ENCODE measurements at regions of chr4 and their contacts with region 1.

Region 1: DNA sequence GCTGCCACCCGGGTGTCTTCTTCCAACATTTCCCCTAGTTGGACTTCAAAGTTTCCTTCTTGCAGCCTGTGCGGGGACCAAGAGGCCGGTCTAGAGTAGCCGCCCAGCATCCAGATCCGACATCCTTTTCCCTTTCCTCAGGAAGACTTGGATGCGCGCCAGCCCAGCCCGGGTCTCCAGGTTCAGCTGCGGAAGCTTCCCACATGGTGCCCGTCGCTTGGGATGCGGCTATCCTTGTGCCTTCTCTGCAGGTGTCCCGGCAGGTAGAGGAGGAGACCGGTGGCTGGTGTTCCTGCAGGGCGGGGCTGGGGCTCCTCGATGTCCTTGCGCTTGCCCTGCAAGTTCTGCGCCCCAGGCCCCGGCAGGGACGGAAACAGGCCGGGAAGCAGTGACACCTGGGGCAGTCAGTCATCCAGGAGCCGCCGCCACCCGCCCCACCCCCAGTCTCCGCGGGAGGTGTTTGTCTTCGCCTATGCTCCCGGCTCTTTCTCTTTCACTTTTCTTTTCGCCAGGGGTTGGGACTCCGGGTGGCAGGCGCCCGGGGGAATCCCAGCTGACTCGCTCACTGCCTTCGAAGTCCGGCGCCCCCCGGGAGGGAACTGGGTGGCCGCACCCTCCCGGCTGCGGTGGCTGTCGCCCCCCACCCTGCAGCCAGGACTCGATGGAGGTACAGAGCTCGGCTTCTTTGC is at the start of gene IL15:
- DNase-seq: peak; percentile 29 to 79
- H3K4me3 ChIP-seq: peak within 1 kb of the TSS; percentile 88 to 94
- H3K27ac ChIP-seq: peak within 1 kb of the TSS; percentile 89 to 92
- H3K4me1 ChIP-seq: peaks cover 0 to 9% of the 10 kb centered on the region in 2 donors
- H3K27me3 ChIP-seq: no peaks in the 10 kb centered on the region
- CTCF ChIP-seq: no peak
- total RNA-seq, gene IL15: 11.5 TPM

Region 2: DNA sequence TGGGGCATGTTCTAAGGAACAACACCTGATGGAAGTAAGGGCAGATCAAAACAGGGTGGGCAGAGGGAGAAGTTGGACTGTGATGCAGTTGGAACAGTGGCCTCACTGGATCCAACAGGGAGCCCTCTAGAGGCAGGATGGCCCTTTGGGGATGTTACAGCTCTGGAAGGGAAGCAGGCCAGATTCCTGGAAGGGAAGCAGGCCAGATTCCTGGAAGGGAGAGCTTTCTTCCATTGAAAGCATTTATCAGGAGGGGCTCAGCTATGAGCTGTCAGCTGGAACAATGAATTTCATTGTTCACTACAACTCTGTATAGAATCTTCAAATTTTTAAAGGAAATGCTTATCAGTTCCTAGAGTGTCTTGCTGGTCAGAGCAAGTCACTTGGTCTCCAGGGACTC is 17.9 kb after region 1 on chr4:
- intact Hi-C with region 1: loop called (anchors 2 kb)
- DNase-seq: peak in 1 of 2 donors; percentile 69
- H3K4me3 ChIP-seq: no peak overlapping the region
- H3K27ac ChIP-seq: peak overlapping the region; percentile 62 to 78
- H3K4me1 ChIP-seq: peaks cover 0 to 20% of the 10 kb centered on the region in 2 donors
- H3K27me3 ChIP-seq: no peaks in the 10 kb centered on the region
- CTCF ChIP-seq: peak in 2 of 3 experiments; percentile 18 to 34

Region 3: DNA sequence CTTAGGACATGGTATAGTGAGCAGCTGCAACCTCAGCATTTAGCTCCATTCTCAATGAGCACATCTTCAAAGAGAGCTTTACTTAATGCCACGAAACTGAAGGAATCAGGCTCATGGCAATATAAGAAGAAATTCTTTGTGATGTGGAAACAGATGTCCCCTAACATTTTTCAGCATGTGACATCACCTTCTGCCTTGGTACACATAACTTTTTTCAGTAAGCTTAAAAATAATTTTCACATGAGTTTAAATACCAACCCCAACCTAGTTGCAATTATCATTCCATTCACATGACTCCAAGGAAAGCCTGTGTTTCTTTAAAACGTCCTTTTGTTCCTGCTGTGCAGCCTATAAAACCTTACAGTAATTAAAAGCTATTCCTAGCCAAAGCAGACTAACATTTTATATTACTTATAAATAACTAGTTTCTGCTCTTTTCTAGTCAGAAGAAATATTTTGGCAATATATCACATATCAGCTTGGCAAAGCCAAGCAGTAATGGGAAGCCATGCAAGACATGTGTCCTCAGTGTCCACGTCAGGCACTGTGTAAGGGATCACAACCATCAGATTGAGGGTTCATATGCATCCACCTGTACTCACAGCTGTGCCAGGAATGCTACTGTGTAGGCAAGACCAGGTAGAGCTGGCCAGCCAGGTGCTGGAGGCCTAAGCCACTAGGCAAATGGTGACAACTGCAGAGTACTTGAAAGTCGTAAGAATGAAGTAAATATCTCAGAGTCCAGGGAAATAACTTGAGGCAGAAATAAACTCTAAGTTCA is 743.2 kb after region 1 on chr4:
- intact Hi-C with region 1: loop called (anchors 10 kb)
- DNase-seq: no peak
- H3K4me3 ChIP-seq: no peak overlapping the region
- H3K27ac ChIP-seq: peak overlapping the region; percentile 61 to 71
- H3K4me1 ChIP-seq: peaks cover 4 to 18% of the 10 kb centered on the region in 2 donors
- H3K27me3 ChIP-seq: no peaks in the 10 kb centered on the region
- CTCF ChIP-seq: no peak

Region 4: DNA sequence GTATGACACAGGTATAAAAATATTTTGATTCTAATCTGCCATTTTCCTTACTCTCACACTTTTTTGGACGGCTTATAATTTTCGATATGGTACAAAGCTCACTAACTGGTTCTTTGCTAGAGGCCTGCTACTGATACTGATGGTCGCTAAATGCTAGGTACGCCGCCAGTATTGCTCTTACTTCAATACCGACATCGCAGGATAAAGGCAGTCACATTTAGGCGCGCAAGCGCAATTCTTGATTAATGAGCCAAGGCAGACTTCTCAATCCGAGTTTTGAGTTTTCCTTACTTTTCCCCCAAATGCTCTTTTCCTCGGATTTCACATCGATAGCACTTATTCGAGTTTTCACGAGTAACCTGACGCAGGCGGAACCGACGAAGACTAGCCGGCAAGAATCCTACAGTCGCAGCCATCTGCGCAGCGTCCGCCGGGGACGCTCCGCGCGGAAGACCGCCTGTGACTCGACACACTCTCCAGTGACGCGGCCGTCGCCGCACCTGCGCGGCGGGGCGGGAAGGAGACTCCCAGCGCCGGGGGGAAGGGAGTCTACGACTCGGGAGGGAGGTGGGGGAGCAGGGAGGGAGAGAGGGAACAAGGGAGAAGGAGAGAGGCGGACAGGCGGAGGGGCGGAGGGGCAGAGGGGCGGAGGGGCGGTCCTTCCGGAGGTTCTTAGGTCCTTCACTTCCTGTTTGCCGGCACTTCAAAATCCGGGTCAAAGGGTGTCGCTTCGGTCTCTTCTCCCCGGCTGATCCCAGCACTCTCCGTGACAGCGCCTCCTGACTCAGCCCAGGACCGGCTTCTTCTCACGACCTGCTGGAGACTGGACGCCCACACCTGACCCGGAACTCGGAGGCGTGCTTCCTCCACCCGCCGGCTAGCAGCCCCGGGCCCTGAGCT is 1548.2 kb after region 1 on chr4 and contains the start of gene USP38:
- intact Hi-C with region 1: loop called (anchors 5 kb)
- DNase-seq: peak; percentile 66 to 95
- H3K4me3 ChIP-seq: peak within 1 kb of the TSS; percentile 77 to 80
- H3K27ac ChIP-seq: peak within 1 kb of the TSS; percentile 94 to 95
- H3K4me1 ChIP-seq: peaks cover 6 to 23% of the 10 kb centered on the region in 2 donors
- H3K27me3 ChIP-seq: no peaks in the 10 kb centered on the region
- CTCF ChIP-seq: no peak
- total RNA-seq, gene USP38: 6.7 TPM

Measured in ascending aorta (tissue), 2 donors.